ENCODE measurements at regions of chr17 and their contacts with region 1.

Region 1: GRCh38 chr17:45148183-45149036 is at the start of gene HEXIM1:
- DNase-seq: peak; percentile 95 to 100 (median 97)
- ATAC-seq: peak; percentile 77
- H3K4me3 ChIP-seq: peak within 1 kb of the TSS; percentile 69
- H3K27ac ChIP-seq: peak within 1 kb of the TSS; percentile 97
- H3K4me1 ChIP-seq: peaks cover 39 to 48% of the 10 kb centered on the region in 2 experiments
- H3K27me3 ChIP-seq: no peaks in the 10 kb centered on the region
- CTCF ChIP-seq: peak in 2 of 3 experiments; percentile 0 to 2; a peak in 1 of 6 replicates
- EP300 ChIP-seq: no peak
- POLR2A ChIP-seq: peak; percentile 100
- RAD21 ChIP-seq: 0 out of 4 replicates have a peak, but pooled peaks of 1 of the 2 experiments have one; percentile 10
- polyA plus RNA-seq, gene HEXIM1: 1.4 to 1.6 TPM

Region 2: GRCh38 chr17:45006927-45007461 is 141.4 kb before region 1 on chr17:
- CTCF ChIA-PET with region 1: no interaction called
- POLR2A ChIA-PET with region 1: no interaction called
- in situ Hi-C with region 1: no loop called
- intact Hi-C with region 1: no loop called
- DNase-seq: no peak
- ATAC-seq: no peak; the same call in 2 of the 3 replicates
- H3K4me3 ChIP-seq: no peak overlapping the region
- H3K27ac ChIP-seq: no peak overlapping the region
- H3K4me1 ChIP-seq: peaks cover 0 to 9% of the 10 kb centered on the region in 2 experiments; a peak in 1 of 5 replicates
- H3K27me3 ChIP-seq: peaks cover 12 to 59% of the 10 kb centered on the region in 2 experiments; a peak in 4 of 5 replicates
- CTCF ChIP-seq: peak in 1 of 3 experiments; percentile 26; a peak in 1 of 6 replicates
- EP300 ChIP-seq: no peak
- POLR2A ChIP-seq: no peak
- RAD21 ChIP-seq: 0 out of 4 replicates have a peak, but pooled peaks of 1 of the 2 experiments have one; percentile 11

Region 3: DNA sequence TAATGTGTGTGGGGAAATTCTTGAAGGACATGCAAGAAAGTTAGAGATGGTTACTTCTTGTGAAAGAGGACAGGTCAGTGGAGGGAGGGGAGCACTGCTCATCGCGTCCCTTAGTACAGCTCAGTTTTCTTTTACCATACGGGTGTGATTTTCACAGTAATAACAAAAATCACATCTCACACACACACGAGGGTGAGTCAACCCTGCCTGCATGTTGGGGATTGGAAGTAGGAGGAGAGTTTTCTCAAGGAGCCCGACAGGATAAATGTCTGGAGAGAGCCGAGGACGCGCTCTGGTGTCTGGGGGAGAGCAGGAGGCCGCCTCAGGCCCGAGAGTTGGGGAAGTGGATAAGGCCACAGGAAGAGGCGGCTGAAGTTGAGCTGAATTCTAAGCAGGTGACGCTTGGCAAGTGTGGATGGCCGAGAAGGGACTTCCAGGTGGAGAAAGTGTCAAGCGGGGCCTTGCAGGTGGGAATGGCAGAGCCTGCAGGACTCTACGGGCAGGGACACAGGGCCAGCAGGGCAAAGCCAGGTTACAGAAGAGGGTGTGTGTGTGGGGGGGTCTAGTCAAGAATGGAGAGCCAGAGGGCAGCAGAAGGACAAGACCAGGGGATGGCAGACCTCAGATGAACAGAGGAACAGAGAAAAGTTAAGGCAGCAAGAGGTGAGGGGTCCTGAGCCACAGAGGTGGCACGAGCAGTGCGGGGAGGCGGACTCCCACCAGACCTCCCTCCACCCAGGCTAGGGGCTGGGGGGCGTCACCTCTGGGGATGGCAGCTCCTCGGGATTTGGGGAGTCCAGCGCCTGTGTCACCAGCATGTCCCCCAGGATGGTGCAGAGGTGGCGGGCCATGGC is 32.3 kb before region 1 on chr17:
- CTCF ChIA-PET with region 1: no interaction called
- POLR2A ChIA-PET with region 1: interaction called, 14 read pairs
- in situ Hi-C with region 1: no loop called
- intact Hi-C with region 1: no loop called
- DNase-seq: peak in 1 of 4 experiments; percentile 29
- ATAC-seq: peak; percentile 36; the same call in 2 of the 3 replicates
- H3K4me3 ChIP-seq: no peak overlapping the region
- H3K27ac ChIP-seq: no peak overlapping the region
- H3K4me1 ChIP-seq: peaks cover 0 to 40% of the 10 kb centered on the region in 2 experiments; a peak in 3 of 5 replicates
- H3K27me3 ChIP-seq: no peaks in the 10 kb centered on the region
- CTCF ChIP-seq: no peak
- EP300 ChIP-seq: no peak
- POLR2A ChIP-seq: no peak
- RAD21 ChIP-seq: no peak

Region 4: GRCh38 chr17:45161019-45161825 is 12.8 kb after region 1 on chr17:
- CTCF ChIA-PET with region 1: interaction called, 4 read pairs
- POLR2A ChIA-PET with region 1: interaction called, 497 read pairs
- in situ Hi-C with region 1: no loop called
- intact Hi-C with region 1: loop called (anchors 1 kb)
- DNase-seq: peak; percentile 90 to 100 (median 95)
- ATAC-seq: peak; percentile 92
- H3K4me3 ChIP-seq: peak overlapping the region; percentile 86
- H3K27ac ChIP-seq: peak overlapping the region; percentile 98
- H3K4me1 ChIP-seq: peaks cover 38 to 39% of the 10 kb centered on the region in 2 experiments
- H3K27me3 ChIP-seq: no peaks in the 10 kb centered on the region
- CTCF ChIP-seq: no peak; a peak in 3 of 6 replicates
- EP300 ChIP-seq: peak; percentile 23
- POLR2A ChIP-seq: peak; percentile 94
- RAD21 ChIP-seq: 0 out of 4 replicates have a peak, but pooled peaks of 1 of the 2 experiments have one; percentile 4

Region 5: GRCh38 chr17:45197555-45198334 is 49.3 kb after region 1 on chr17:
- CTCF ChIA-PET with region 1: interaction called, 3 read pairs
- POLR2A ChIA-PET with region 1: interaction called, 137 read pairs
- in situ Hi-C with region 1: no loop called
- intact Hi-C with region 1: loop called (anchors 2 kb)
- DNase-seq: peak; percentile 91 to 96 (median 94)
- ATAC-seq: peak; percentile 100
- H3K4me3 ChIP-seq: no peak overlapping the region
- H3K27ac ChIP-seq: no peak overlapping the region
- H3K4me1 ChIP-seq: peaks cover 12 to 13% of the 10 kb centered on the region in 2 experiments
- H3K27me3 ChIP-seq: no peaks in the 10 kb centered on the region
- CTCF ChIP-seq: peak; percentile 100
- EP300 ChIP-seq: peak; percentile 28; the same call in 1 of the 2 replicates
- POLR2A ChIP-seq: no peak
- RAD21 ChIP-seq: peak; percentile 99

Region 6: DNA sequence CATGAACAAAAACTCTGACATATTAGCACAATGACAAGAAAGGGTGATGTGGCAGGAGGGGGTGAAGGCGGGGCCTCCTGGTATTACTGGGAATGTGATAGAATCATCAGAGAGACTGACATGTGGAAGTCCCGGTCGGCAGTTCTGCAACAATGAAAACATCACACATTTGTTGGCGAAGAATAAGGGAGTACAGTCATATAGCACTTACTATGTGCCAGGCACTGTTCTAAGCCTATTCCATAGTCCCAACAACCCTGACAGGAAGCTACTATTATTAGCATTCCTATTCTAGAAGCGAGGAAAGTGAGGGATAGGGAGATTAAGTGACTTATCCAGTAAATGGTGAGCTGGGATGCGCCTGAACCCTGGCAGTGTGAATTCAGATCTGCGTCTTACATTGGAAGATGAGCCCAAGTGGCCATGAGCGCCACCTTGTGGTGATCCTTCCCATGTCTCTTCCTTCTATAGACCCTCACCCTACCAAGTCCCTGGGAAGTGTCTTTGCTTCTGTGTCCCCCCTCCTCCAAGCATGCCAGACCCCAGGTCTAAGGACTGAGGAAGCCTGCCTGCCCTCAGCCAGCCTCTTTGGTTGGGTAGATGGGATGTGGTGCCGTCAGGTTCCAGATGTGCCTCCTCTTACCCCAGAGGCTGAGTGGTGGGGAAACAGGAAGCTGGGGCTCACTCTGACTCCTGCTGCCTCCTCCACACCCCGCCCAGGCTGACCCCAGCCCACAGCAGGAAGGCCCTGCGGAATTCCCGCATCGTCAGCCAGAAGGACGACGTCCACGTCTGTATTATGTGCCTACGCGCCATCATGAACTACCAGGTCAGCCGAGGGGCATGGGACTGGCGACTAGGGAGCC is 87.2 kb after region 1 on chr17:
- CTCF ChIA-PET with region 1: no interaction called
- POLR2A ChIA-PET with region 1: interaction called, 92 read pairs
- in situ Hi-C with region 1: no loop called
- intact Hi-C with region 1: no loop called
- DNase-seq: peak; percentile 68 to 85 (median 72)
- ATAC-seq: peak; percentile 86
- H3K4me3 ChIP-seq: no peak overlapping the region
- H3K27ac ChIP-seq: no peak overlapping the region
- H3K4me1 ChIP-seq: peaks cover 4 to 26% of the 10 kb centered on the region in 2 experiments; a peak in 3 of 5 replicates
- H3K27me3 ChIP-seq: no peaks in the 10 kb centered on the region
- CTCF ChIP-seq: peak; percentile 77 to 90 (median 82)
- EP300 ChIP-seq: no peak
- POLR2A ChIP-seq: no peak
- RAD21 ChIP-seq: peak; percentile 55 to 78; a peak in 3 of 4 replicates

Region 7: DNA sequence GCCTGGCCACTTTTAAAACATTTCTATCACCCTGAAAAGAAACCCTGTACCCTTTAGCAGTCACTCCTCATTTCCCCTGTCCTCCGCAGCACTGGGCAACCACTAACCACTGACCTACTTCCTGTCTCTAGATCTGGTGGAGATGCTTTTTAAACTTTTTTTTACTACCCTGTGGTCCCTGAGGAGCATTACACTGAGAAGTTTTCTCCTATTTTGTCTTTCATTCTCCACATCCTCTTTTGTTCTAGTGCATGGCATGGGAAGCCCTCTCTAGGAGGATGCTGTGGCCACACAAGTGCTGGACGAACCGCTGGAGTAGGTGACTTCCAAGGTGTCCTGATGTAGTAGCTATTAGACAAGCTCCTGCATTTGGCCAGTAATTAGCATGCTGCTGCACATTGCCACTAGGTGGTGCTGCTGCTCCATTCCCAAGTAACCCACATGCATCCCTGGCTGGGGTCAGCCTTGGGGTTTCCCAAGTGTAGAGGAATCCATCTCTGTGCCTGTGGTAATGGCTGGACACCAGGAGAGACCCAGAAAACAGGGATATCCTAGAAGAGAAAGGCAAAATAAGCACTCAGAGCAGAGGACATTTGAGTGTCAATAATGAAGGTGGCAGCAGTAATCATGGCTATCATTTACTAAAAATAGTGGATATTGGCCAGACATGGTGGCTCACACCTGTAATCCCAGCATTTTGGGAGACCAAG is 491.9 kb after region 1 on chr17:
- CTCF ChIA-PET with region 1: no interaction called
- POLR2A ChIA-PET with region 1: no interaction called
- in situ Hi-C with region 1: no loop called
- intact Hi-C with region 1: no loop called
- DNase-seq: peak; percentile 69 to 83 (median 80)
- ATAC-seq: peak; percentile 96
- H3K4me3 ChIP-seq: no peak overlapping the region
- H3K27ac ChIP-seq: no peak overlapping the region
- H3K4me1 ChIP-seq: no peaks in the 10 kb centered on the region
- H3K27me3 ChIP-seq: peaks cover 8 to 14% of the 10 kb centered on the region in 2 experiments; a peak in 4 of 5 replicates
- CTCF ChIP-seq: peak; percentile 94 to 96 (median 96)
- EP300 ChIP-seq: no peak
- POLR2A ChIP-seq: no peak
- RAD21 ChIP-seq: peak; percentile 85 to 92

Measured in K562 (cell line).